ENCODE measurements at regions of chr21 and their contacts with region 1.

Region 1: GRCh38 chr21:37711836-37712568 is 204.3 kb downstream of the KCNJ6 start:
- DNase-seq: peak; percentile 71
- ATAC-seq: peak; percentile 89

Region 2: GRCh38 chr21:37514038-37514665 is 197.8 kb before region 1 on chr21:
- intact Hi-C with region 1: no loop called
- DNase-seq: no peak
- ATAC-seq: no peak

Region 3: GRCh38 chr21:37631319-37632117 is 80.5 kb before region 1 on chr21:
- intact Hi-C with region 1: no loop called
- DNase-seq: no peak
- ATAC-seq: no peak

Region 4: GRCh38 chr21:37916310-37917051 is 204.5 kb after region 1 on chr21 and contains the start of gene KCNJ6:
- intact Hi-C with region 1: loop called (anchors 10 kb)
- DNase-seq: peak; percentile 53
- ATAC-seq: peak; percentile 85
- total RNA-seq, gene KCNJ6: not detected

Region 5: DNA sequence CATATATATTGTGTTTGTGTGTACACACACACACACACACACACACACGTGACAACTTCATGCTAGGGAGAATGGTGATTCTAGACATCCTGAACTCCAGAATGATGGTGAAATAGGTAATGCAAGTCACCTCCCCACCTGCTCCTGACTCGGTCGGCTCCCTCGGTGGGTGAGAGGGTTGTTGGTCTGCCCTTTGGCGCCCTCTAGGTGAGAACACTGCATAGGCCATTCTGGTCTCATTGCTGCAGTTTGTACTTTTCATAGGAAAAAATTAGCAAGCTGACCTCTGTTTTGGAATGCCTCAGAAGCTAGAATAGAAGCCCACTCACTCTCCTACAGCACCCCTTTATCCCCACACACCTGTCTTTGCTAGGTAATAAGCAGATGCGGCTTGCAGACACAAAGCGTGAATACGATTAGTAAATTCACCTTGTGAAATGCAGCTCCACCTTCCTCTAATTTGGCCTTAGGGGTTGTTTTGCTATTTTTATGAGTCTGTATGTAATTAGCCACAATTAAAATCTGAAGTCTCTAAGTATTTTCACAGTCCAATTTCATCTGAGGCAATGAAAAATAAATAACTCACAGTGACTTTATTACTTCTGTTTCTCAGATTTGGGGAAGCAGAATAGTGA is 414.8 kb after region 1 on chr21:
- intact Hi-C with region 1: loop called (anchors 2 kb)
- DNase-seq: peak; percentile 48
- ATAC-seq: peak; percentile 89